Aorta (tissue), 5 donors: ENCODE measurements at regions of chr2 and their contacts with region 1.

Region 1: GRCh38 chr2:61854474-61855182 is 768 bp upstream of the FAM161A start:
- DNase-seq: peak; percentile 91
- ATAC-seq: peak; percentile 96
- H3K4me3 ChIP-seq: peak overlapping the region; percentile 45 to 91
- H3K27ac ChIP-seq: peak overlapping the region in 1 of 2 donors; percentile 13
- H3K4me1 ChIP-seq: no peaks in the 10 kb centered on the region
- H3K27me3 ChIP-seq: no peaks in the 10 kb centered on the region

Region 2: DNA sequence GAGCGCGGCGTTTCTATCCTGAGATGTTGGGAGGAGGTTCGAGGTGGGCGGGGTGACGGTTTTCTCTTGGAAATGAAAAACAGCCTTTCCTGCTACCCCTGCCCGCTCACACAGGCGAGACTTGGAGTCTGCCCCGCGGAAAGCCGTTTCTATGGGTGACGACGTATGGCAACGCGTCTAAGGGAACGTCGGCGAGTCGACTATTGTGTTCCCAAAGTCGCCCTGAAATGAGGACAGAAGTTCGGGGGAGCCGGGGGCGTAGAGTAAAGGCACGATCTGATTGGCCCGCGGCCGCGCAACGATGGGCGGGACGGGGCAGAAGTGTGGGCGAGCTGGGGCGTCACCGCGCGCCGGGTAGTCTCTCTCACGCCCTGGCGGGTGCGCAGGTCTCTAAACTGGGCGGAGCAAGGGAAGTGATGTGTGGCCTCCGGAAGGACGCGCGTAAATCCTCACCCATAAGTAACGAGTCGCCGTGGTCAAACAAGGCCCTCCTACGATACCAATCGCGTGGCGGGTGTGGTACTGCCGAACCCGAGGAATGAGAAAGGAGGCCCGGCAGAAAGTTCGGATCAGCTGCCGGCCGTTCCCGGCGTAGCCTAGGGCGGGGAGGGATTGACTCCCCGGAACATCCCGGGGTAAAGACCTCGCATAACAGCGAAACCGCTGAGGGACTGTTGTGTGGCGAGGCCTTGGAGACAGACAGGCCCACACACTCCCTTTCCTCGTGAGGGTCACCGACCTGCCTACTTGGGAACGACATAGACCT is 90.4 kb before region 1 on chr2:
- intact Hi-C with region 1: loop called in 1 of 2 experiments (anchors 5 kb)
- DNase-seq: peak; percentile 98
- ATAC-seq: peak; percentile 99
- H3K4me3 ChIP-seq: peak overlapping the region; percentile 68 to 86
- H3K27ac ChIP-seq: peak overlapping the region; percentile 10 to 97
- H3K4me1 ChIP-seq: no peaks in the 10 kb centered on the region
- H3K27me3 ChIP-seq: no peaks in the 10 kb centered on the region

Region 3: GRCh38 chr2:61888267-61889055 is 33.8 kb after region 1 on chr2 and contains the start of gene CCT4:
- intact Hi-C with region 1: loop called in 1 of 2 experiments (anchors 2 kb)
- DNase-seq: peak; percentile 92 to 96
- ATAC-seq: peak; percentile 99
- H3K4me3 ChIP-seq: peak within 1 kb of the TSS; percentile 82 to 92
- H3K27ac ChIP-seq: peak within 1 kb of the TSS; percentile 62 to 92
- H3K4me1 ChIP-seq: no peaks in the 10 kb centered on the region
- H3K27me3 ChIP-seq: no peaks in the 10 kb centered on the region
- total RNA-seq, gene CCT4: 78.8 to 99.1 TPM